ENCODE measurements at regions of chr4 and their contacts with region 1.

Region 1: DNA sequence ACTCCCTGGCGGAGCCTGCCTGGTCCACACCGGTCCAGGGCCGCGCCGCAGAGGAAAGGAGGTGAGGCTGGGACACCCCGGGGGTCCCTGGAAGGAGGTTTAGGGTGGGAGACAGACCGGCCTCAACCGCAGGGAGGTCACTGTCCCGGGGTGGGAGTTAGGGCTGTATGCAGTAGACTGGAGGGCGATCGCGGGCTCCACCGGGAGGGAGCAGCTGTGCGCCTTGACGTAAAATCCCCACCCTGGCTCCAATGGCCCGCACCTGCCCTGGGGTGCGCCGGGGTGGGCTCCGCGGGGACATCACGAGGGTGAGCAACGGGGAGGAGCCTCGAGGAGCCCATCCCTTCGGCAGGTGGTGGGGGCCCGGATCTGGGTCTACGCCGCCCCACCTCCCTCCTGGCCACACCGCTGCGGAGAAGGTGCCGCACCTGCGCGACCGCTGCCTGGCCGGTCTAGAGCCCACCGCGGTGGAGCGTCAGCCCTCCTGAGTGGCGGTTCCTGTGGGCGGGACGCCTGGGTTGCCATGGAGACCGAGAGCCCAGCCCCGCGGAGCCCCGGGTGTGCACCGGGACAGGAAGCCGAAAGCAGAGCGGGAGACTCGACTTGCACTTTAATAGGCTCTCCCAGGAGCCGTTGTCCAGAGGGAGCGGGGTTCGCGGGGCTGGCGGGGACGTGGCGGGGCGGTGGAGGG is 105.1 kb downstream of the ADRA2C start:
- DNase-seq: no peak
- ATAC-seq: no peak
- H3K4me3 ChIP-seq: no peak overlapping the region
- H3K27ac ChIP-seq: no peak overlapping the region
- H3K4me1 ChIP-seq: peaks cover 25% of the 10 kb centered on the region
- H3K27me3 ChIP-seq: peaks cover 0 to 36% of the 10 kb centered on the region in 2 experiments; a peak in 3 of 5 replicates
- CTCF ChIP-seq: no peak
- EP300 ChIP-seq: no peak
- POLR2A ChIP-seq: no peak
- RAD21 ChIP-seq: no peak

Region 2: GRCh38 chr4:3827616-3828492 is 43.5 kb before region 1 on chr4:
- CTCF ChIA-PET with region 1: no interaction called
- POLR2A ChIA-PET with region 1: no interaction called
- in situ Hi-C with region 1: no loop called
- intact Hi-C with region 1: loop called (anchors 10 kb)
- DNase-seq: peak; percentile 85
- ATAC-seq: peak; percentile 75
- H3K4me3 ChIP-seq: peak overlapping the region; percentile 4 to 61 (median 5); a peak in 3 of 6 replicates
- H3K27ac ChIP-seq: peak overlapping the region; percentile 91
- H3K4me1 ChIP-seq: peaks cover 100% of the 10 kb centered on the region
- H3K27me3 ChIP-seq: no peaks in the 10 kb centered on the region
- CTCF ChIP-seq: peak; percentile 47
- EP300 ChIP-seq: peak in 1 of 2 experiments; percentile 54; a peak in 1 of 4 replicates
- POLR2A ChIP-seq: peak in 1 of 2 experiments; percentile 38; a peak in 1 of 4 replicates
- RAD21 ChIP-seq: peak; percentile 56